Posterior vena cava (tissue), 2 donors: ENCODE measurements at regions of chr14 and their contacts with region 1.

Region 1: DNA sequence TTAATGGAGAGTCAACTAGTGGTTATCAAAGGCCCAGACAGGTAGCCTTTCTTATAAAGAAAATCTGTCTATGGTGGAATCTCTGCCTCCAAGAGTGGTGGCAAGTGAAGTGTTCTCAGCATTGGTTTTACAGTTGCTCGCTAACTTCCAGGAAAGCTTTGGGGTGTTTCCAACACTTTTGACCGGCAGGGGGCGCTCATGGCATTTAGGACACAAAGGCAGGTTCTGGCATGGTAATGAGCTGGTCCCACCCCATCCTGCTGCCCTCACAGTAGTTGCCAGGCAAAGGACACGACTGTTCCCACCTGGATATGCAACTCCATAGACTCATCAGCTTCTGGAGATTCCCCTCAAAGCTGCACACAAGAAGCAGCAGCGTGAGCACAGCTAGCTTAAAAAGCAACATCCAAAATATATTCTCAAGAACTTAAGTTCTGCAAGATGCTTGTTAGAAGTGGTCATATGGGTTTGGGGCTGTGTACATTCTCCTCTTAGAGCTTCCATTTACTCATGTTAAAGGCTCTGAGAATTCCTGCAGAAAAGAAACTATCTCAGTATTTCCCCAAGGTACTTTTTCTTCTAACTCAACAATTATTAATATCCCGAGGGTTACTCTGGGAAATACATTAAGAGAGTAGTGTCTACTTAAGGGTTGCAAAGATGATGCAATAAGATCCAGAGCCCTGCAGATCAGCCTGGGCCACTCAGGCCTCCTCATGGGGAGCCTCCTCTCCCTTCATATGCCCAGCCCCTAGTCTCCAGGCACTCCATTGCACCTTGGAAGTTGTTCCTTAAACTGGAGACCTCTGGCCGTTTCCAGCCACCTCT is 14.8 kb downstream of the PROX2 start:
- DNase-seq: peak; percentile 97

Region 2: DNA sequence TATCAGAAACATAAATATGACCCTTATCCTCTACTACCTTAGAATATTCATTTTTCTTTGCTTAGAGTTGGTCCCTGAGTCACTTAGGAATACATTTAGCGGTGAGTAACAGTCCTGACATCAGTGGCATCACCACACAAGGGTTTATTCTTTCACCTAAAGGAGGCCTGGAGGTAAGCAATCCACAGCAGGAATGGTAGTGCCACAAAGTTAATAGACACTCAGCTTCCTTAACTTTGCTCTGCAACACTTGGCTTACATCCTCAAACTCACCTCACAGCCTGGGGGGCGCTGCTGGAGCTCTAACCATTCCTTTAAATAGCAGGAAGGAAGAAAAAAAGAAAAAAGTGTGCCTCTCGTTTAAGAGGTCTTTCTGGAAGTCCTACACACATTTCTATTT is 812.8 kb before region 1 on chr14:
- intact Hi-C with region 1: no loop called
- DNase-seq: no peak

Region 3: GRCh38 chr14:74905375-74906142 is 44.4 kb after region 1 on chr14:
- intact Hi-C with region 1: loop called (anchors 5 kb)
- DNase-seq: peak; percentile 91

Region 4: DNA sequence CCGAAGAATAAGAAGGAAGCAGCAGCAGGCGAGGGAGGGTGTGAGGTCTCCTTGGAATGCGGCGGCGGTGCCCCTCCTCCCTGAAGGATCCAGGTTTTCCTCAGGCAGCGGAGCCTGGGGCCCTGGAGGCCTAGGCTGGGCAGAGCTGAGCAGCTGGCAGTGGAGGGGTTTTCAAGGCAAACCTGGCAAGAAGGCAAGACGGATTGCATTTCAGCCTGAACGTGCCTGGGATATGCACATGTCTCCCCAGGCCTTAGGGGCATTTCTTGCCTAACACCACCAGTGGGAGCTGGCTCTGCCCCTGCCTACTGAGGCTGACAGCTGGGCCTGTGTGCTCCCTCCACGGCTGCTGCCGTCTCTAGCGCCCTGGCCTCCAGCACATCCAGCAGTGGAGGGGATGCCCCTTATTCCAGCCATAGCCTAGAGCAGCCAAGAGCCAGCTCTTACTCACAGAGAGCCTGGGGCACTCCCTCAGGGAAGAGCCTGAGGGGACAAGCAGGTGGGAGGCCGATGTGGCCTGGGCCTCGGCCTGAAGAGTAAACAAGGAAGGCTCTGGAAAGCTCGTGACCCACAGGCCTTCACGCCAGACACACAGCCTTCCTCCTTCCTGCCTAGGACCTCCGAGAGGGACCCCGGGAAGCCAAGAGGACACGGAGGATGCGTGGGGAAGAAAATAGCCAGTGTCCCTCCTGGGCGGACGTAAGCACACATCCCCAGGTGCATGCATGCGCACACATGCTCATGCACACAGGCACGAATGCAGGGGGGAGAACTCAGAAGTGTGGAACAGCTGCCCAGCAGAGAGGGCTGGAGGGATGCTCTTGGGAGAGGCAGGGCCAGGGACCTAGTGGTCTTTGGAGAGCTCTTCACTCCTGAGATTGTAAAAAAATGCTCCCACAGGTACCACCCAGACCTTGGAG is 118.6 kb after region 1 on chr14:
- intact Hi-C with region 1: no loop called
- DNase-seq: no peak